Activated CD8-positive, alpha-beta T cell treated with anti-CD3 and anti-CD28 coated beads for 36 hours (primary cell): ENCODE measurements at regions of chr16 and their contacts with region 1.

Region 1: DNA sequence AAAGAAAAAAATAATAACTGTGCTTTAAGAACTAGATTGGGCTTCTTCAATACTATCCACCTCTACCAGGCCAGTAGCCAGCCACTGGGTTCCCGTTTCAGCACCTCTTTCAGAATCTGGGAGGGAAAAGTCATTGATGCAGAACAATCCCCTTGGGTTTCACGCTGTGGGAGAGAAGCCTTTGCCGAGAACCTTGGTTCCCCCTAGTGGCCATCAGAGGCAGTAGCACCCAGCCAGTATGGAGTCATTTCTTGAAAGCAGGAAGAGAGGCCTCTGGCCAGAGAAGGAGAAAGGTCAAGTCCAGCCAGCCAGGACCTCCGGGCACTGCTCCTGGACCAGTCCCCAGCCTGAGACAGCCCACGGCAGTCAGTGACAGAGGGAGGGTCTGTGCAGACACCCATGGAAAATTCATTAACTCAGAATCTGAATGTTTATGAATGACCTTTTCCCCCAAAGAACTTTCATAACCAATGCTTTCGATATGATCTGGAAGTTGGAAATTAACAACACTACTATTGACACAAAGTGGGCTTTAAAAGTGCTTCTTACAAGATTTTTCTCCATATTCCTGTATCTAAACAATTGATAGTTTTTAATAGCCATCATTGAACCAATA is 51.2 kb upstream of the CDH5 start:
- DNase-seq: peak; percentile 65
- ATAC-seq: peak; percentile 98
- H3K4me3 Mint-ChIP-seq: no peak overlapping the region
- H3K27ac Mint-ChIP-seq: no peak overlapping the region
- H3K4me1 Mint-ChIP-seq: peaks cover 3% of the 10 kb centered on the region
- H3K27me3 Mint-ChIP-seq: peaks cover 3% of the 10 kb centered on the region
- CTCF ChIP-seq: peak; percentile 96

Region 2: GRCh38 chr16:66275775-66276428 is 39.4 kb before region 1 on chr16:
- CTCF ChIA-PET with region 1: interaction called, 16 read pairs
- POLR2A ChIA-PET with region 1: no interaction called
- intact Hi-C with region 1: loop called (anchors 1 kb)
- DNase-seq: peak; percentile 33
- ATAC-seq: no peak
- H3K4me3 Mint-ChIP-seq: no peak overlapping the region
- H3K27ac Mint-ChIP-seq: no peak overlapping the region
- H3K4me1 Mint-ChIP-seq: no peaks in the 10 kb centered on the region
- H3K27me3 Mint-ChIP-seq: peaks cover 20% of the 10 kb centered on the region
- CTCF ChIP-seq: peak; percentile 61

Region 3: DNA sequence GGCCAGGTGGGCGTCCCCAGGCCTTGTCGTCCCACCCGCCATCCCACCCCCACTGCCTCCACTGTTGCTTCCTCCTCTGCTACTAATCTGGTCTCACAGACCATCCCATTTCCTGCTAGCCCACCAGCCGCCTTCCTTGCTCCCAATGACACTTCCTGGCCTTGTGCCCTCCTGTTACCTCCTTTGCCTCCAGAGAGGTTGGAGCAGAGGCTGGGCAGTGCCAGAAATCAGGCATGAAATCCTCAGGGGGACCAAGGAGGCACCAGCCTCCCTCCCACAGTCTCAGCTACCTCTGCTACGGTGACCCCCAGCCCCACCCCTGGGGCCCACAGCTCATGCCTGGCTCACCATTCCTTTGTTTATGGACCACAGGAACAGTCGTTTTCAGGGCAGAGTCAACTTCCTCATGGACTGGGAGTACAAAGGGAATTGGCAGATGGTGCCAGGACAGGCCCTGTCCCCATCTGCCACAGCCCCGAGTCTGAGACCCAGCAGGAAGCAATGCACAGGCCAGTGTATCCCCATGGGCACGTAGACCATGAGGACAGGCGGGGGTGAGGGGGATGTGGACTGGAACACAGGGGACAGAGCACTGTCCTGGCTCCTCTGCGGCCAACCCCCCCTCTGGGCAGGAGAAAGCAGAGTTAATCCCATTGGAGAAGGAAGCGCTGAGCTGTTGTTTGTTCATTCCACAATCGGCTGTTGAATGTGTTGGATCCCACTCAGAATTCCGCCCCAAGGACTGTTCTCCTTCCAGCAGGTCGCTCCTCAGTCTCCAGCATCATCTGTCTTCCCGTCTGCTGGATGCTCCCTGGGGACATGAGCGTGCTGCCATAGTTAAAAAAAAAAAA is 49.0 kb after region 1 on chr16:
- CTCF ChIA-PET with region 1: no interaction called
- POLR2A ChIA-PET with region 1: no interaction called
- intact Hi-C with region 1: no loop called
- DNase-seq: no peak
- ATAC-seq: no peak
- H3K4me3 Mint-ChIP-seq: no peak overlapping the region
- H3K27ac Mint-ChIP-seq: no peak overlapping the region
- H3K4me1 Mint-ChIP-seq: no peaks in the 10 kb centered on the region
- H3K27me3 Mint-ChIP-seq: peaks cover 37% of the 10 kb centered on the region
- CTCF ChIP-seq: no peak